ENCODE measurements at regions of chr1 and their contacts with region 1.

Region 1: GRCh38 chr1:163071405-163072255 is 2.5 kb downstream of the RGS4 start:
- DNase-seq: peak; percentile 3 to 63
- H3K4me3 ChIP-seq: no peak overlapping the region
- H3K27ac ChIP-seq: no peak overlapping the region
- H3K4me1 ChIP-seq: no peaks in the 10 kb centered on the region; a peak in 1 of 7 replicates
- H3K27me3 ChIP-seq: no peaks in the 10 kb centered on the region
- CTCF ChIP-seq: peak; percentile 73 to 86 (median 77)
- EP300 ChIP-seq: no peak
- POLR2A ChIP-seq: no peak
- RAD21 ChIP-seq: peak; percentile 65 to 72

Region 2: GRCh38 chr1:162847839-162848453 is 223.7 kb before region 1 on chr1:
- CTCF ChIA-PET with region 1: interaction called, 16 read pairs
- POLR2A ChIA-PET with region 1: no interaction called
- DNase-seq: peak in 1 of 2 experiments; percentile 91
- H3K4me3 ChIP-seq: no peak overlapping the region
- H3K27ac ChIP-seq: no peak overlapping the region
- H3K4me1 ChIP-seq: no peaks in the 10 kb centered on the region
- H3K27me3 ChIP-seq: no peaks in the 10 kb centered on the region
- CTCF ChIP-seq: peak; percentile 62 to 80 (median 72)
- EP300 ChIP-seq: no peak
- POLR2A ChIP-seq: no peak
- RAD21 ChIP-seq: peak; percentile 82 to 86

Region 3: GRCh38 chr1:162861101-162861500 is 210.5 kb before region 1 on chr1 and contains the start of gene CCDC190:
- CTCF ChIA-PET with region 1: interaction called, 25 read pairs
- POLR2A ChIA-PET with region 1: no interaction called
- DNase-seq: no peak
- H3K4me3 ChIP-seq: no peak within 1 kb of the TSS
- H3K27ac ChIP-seq: no peak within 1 kb of the TSS
- H3K4me1 ChIP-seq: no peaks in the 10 kb centered on the region
- H3K27me3 ChIP-seq: no peaks in the 10 kb centered on the region
- CTCF ChIP-seq: no peak
- EP300 ChIP-seq: no peak
- POLR2A ChIP-seq: no peak
- RAD21 ChIP-seq: no peak
- total RNA-seq, gene CCDC190: not detected in 2 replicates

Region 4: DNA sequence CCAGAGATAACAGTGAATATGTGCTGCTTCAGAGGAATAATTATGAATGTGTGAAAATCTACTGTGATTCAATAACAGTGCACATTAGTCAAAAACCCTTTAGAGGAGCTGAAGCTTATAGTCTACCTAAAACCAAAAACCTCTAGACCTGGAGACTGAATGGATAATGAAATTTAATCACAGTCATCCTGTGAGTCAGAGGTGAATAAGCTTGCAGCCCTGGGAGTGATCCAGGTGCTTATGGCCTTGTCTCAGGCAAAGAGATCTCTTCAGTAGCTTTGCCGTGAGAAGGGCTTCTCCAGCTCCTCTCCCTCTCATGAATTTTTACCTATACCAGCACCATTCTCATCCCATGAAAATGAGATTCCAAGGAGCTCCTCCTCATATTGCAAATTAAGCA is 83.8 kb before region 1 on chr1:
- CTCF ChIA-PET with region 1: interaction called, 19 read pairs
- POLR2A ChIA-PET with region 1: no interaction called
- DNase-seq: no peak
- H3K4me3 ChIP-seq: no peak overlapping the region
- H3K27ac ChIP-seq: no peak overlapping the region
- H3K4me1 ChIP-seq: 0 out of 7 replicates have a peak, but pooled peaks cover 0 to 2% (median 0%) of the 10 kb centered on the region in 4 experiments
- H3K27me3 ChIP-seq: no peaks in the 10 kb centered on the region
- CTCF ChIP-seq: no peak
- EP300 ChIP-seq: no peak
- POLR2A ChIP-seq: no peak
- RAD21 ChIP-seq: no peak

Region 5: DNA sequence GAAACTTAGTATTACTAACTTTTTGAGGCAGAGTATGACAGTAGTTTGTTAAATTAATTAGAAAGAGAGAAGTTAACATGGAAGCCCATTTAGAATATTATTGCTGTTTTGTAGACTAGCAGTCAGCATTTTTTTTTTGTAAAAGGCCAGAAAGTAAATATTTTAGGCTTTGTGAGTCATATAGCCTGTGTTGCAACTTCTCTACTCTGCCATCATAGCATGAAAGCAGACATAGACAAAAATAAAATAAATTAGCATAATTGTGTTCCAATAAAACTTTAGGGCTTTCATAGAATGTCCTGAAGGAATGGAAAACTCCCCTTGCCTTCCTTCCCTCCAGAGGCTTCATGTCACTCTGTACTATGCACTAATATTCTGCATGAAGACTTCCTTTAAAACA is 14.8 kb before region 1 on chr1:
- CTCF ChIA-PET with region 1: interaction called, 32 read pairs
- POLR2A ChIA-PET with region 1: interaction called, 6 read pairs
- DNase-seq: no peak
- H3K4me3 ChIP-seq: no peak overlapping the region
- H3K27ac ChIP-seq: no peak overlapping the region
- H3K4me1 ChIP-seq: no peaks in the 10 kb centered on the region
- H3K27me3 ChIP-seq: no peaks in the 10 kb centered on the region
- CTCF ChIP-seq: no peak
- EP300 ChIP-seq: no peak
- POLR2A ChIP-seq: no peak
- RAD21 ChIP-seq: no peak

Region 6: GRCh38 chr1:163174524-163175437 is 103.2 kb after region 1 on chr1:
- CTCF ChIA-PET with region 1: interaction called, 32 read pairs
- POLR2A ChIA-PET with region 1: no interaction called
- DNase-seq: peak; percentile 19 to 77
- H3K4me3 ChIP-seq: no peak overlapping the region
- H3K27ac ChIP-seq: no peak overlapping the region
- H3K4me1 ChIP-seq: no peaks in the 10 kb centered on the region; a peak in 1 of 7 replicates
- H3K27me3 ChIP-seq: no peaks in the 10 kb centered on the region
- CTCF ChIP-seq: peak; percentile 64 to 78 (median 72)
- EP300 ChIP-seq: no peak
- POLR2A ChIP-seq: no peak
- RAD21 ChIP-seq: peak; percentile 74 to 76

Measured in H1 (cell line).